A549 (cell line): ENCODE measurements at regions of chr19 and their contacts with region 1.

Region 1: GRCh38 chr19:3479177-3479833 is 1.0 kb downstream of the SMIM24 start:
- DNase-seq: peak in 1 of 2 experiments; percentile 66
- ATAC-seq: peak in 1 of 2 experiments; percentile 56; a peak in 3 of 6 replicates
- H3K4me3 ChIP-seq: no peak overlapping the region
- H3K27ac ChIP-seq: 0 out of 6 replicates have a peak overlapping the region, but pooled peaks of 1 of the 2 experiments have one; percentile 21
- H3K4me1 ChIP-seq: peaks cover 2% of the 10 kb centered on the region; the same call in 2 of the 3 replicates
- CTCF ChIP-seq: no peak
- EP300 ChIP-seq: no peak
- POLR2A ChIP-seq: no peak
- RAD21 ChIP-seq: no peak

Region 2: GRCh38 chr19:1592755-1593500 is 1886.4 kb before region 1 on chr19 and contains the start of gene MBD3:
- CTCF ChIA-PET with region 1: no interaction called
- POLR2A ChIA-PET with region 1: no interaction called
- DNase-seq: peak; percentile 80 to 93
- ATAC-seq: peak; percentile 80 to 83
- H3K4me3 ChIP-seq: peak within 1 kb of the TSS; percentile 93
- H3K27ac ChIP-seq: peak within 1 kb of the TSS; percentile 97 to 99
- H3K4me1 ChIP-seq: peaks cover 18% of the 10 kb centered on the region
- CTCF ChIP-seq: no peak
- EP300 ChIP-seq: no peak
- POLR2A ChIP-seq: peak; percentile 67
- RAD21 ChIP-seq: no peak
- polyA plus RNA-seq, gene MBD3: 22.7 and 23.3 TPM in 2 replicates

Region 3: DNA sequence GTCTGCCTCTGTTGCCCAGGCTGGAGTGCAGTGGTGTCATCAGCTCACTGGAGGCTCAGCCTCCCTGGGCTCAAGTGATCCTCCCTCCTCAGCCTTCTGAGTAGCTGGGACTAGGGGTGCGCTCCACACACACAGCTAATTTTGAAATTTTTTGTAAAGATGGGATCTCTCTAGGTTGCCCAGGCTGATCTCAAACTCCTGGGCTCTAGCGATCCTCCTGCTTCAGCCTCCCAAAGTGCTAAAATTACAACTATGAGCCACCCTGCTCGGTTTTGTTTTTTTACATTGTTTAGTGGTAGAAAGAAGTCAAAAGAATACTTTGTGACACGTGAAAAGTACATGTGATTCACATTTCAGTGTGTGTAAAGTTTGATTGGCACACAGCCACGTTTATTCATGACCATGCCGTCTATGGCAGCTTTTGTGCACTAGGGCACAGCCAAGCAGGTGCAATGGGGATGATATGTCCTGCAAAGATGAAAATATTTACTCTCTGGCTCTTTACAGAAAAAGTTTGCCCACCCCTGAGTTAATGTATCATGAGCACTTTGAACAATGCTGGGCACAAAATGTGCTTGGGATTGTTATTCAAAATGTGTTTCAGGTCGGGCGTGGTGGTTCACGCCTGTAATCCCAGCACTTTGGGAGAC is 129.2 kb before region 1 on chr19:
- CTCF ChIA-PET with region 1: interaction called, 10 read pairs
- POLR2A ChIA-PET with region 1: no interaction called
- DNase-seq: no peak
- ATAC-seq: no peak
- H3K4me3 ChIP-seq: no peak overlapping the region
- H3K27ac ChIP-seq: peak overlapping the region; percentile 21 to 44; a peak in 2 of 6 replicates
- H3K4me1 ChIP-seq: peaks cover 17% of the 10 kb centered on the region
- CTCF ChIP-seq: no peak
- EP300 ChIP-seq: no peak
- POLR2A ChIP-seq: no peak
- RAD21 ChIP-seq: no peak

Region 4: GRCh38 chr19:3500429-3501130 is 21.3 kb after region 1 on chr19 and contains the start of gene DOHH:
- CTCF ChIA-PET with region 1: interaction called, 32 read pairs
- POLR2A ChIA-PET with region 1: no interaction called
- DNase-seq: peak; percentile 90 to 97
- ATAC-seq: peak; percentile 95 to 96
- H3K4me3 ChIP-seq: peak within 1 kb of the TSS; percentile 93
- H3K27ac ChIP-seq: peak within 1 kb of the TSS; percentile 96 to 99
- H3K4me1 ChIP-seq: peaks cover 15% of the 10 kb centered on the region; the same call in 2 of the 3 replicates
- CTCF ChIP-seq: no peak
- EP300 ChIP-seq: no peak
- POLR2A ChIP-seq: peak; percentile 72
- RAD21 ChIP-seq: no peak
- polyA plus RNA-seq, gene DOHH: 3.3 and 4.6 TPM in 2 replicates

Region 5: GRCh38 chr19:3516675-3517207 is 37.4 kb after region 1 on chr19:
- CTCF ChIA-PET with region 1: no interaction called
- POLR2A ChIA-PET with region 1: no interaction called
- DNase-seq: no peak
- ATAC-seq: no peak; a peak in 1 of 6 replicates
- H3K4me3 ChIP-seq: no peak overlapping the region
- H3K27ac ChIP-seq: no peak overlapping the region; a peak in 1 of 6 replicates
- H3K4me1 ChIP-seq: peaks cover 13% of the 10 kb centered on the region; the same call in 2 of the 3 replicates
- CTCF ChIP-seq: no peak
- EP300 ChIP-seq: no peak
- POLR2A ChIP-seq: no peak
- RAD21 ChIP-seq: no peak